Activated naive CD8-positive, alpha-beta T cell treated with anti-CD3 and anti-CD28 coated beads, Interleukin-2, amount 10 ng/mL, durations not matched to agents 7 days and 5 days (primary cell): ENCODE measurements at regions of chr1 and their contacts with region 1.

Region 1: GRCh38 chr1:32773018-32773763 is 44.0 kb downstream of the YARS1 start:
- DNase-seq: peak; percentile 79
- ATAC-seq: peak; percentile 85
- H3K4me3 Mint-ChIP-seq: no peak overlapping the region
- H3K27ac Mint-ChIP-seq: peak overlapping the region; percentile 12
- H3K4me1 Mint-ChIP-seq: peaks cover 5% of the 10 kb centered on the region
- H3K27me3 Mint-ChIP-seq: no peaks in the 10 kb centered on the region

Region 2: GRCh38 chr1:32713081-32713480 is 60.1 kb before region 1 on chr1:
- POLR2A ChIA-PET with region 1: interaction called, 20 read pairs
- DNase-seq: no peak
- ATAC-seq: no peak
- H3K4me3 Mint-ChIP-seq: no peak overlapping the region
- H3K27ac Mint-ChIP-seq: no peak overlapping the region
- H3K4me1 Mint-ChIP-seq: peaks cover 4% of the 10 kb centered on the region
- H3K27me3 Mint-ChIP-seq: peaks cover 2% of the 10 kb centered on the region